ENCODE measurements at regions of chr3 and their contacts with region 1.

Region 1: DNA sequence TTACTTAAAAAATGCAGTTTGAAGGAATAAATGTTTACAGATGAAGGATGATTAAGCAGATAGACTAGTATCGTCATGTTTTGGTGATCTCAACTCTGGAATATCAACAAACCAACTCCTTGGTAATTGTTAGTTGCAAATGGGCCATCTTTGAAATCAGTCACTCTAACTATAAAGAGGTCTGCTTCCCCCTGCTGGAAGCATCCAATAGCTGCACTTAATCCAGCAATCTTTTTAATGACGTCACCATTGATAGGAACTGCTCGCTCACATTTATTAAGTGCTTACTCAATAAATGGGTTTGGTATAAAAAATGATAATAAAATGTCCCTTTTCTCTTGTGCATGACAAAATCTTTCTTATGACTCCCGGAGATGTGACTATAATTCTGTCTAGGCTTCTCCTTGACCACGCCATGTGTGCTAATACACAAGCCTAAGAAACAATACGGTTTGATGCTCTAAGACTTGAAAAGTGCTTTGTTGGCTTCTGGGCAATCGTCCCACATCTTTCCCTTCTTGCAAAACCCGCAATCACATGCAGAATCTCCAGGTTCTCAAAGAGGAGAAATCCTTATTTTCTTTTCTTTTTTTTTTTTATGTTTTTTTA is 227.6 kb upstream of the POU1F1 start:
- H3K4me3 ChIP-seq: no peak overlapping the region; the same call in 1 of the 2 replicates
- H3K27ac ChIP-seq: no peak overlapping the region
- H3K4me1 ChIP-seq: no peaks in the 10 kb centered on the region
- CTCF ChIP-seq: 0 out of 2 replicates have a peak, but pooled peaks have one; percentile 21

Region 2: DNA sequence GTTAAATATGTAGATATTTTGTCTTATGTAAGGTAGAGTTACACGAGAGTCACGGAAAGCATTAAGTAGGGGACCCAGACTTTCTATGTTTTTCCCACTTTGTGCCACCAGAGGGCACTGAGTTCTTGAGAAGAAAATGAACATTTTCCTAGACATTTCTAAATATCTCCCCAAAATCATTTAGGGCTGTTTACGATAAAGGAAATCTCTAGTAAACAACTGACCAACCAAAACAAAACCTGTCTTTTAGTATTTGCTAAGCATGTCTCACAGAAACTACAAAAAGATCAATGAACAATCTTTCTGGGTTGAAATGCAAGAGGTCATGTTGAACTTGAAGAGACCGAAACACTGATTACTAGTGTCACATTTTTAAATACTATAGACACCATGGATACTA is 243.7 kb before region 1 on chr3:
- CTCF ChIA-PET with region 1: interaction called, 15 read pairs
- POLR2A ChIA-PET with region 1: no interaction called
- H3K4me3 ChIP-seq: no peak overlapping the region
- H3K27ac ChIP-seq: no peak overlapping the region
- H3K4me1 ChIP-seq: no peaks in the 10 kb centered on the region
- CTCF ChIP-seq: no peak